ENCODE measurements at regions of chr17 and their contacts with region 1.

Region 1: DNA sequence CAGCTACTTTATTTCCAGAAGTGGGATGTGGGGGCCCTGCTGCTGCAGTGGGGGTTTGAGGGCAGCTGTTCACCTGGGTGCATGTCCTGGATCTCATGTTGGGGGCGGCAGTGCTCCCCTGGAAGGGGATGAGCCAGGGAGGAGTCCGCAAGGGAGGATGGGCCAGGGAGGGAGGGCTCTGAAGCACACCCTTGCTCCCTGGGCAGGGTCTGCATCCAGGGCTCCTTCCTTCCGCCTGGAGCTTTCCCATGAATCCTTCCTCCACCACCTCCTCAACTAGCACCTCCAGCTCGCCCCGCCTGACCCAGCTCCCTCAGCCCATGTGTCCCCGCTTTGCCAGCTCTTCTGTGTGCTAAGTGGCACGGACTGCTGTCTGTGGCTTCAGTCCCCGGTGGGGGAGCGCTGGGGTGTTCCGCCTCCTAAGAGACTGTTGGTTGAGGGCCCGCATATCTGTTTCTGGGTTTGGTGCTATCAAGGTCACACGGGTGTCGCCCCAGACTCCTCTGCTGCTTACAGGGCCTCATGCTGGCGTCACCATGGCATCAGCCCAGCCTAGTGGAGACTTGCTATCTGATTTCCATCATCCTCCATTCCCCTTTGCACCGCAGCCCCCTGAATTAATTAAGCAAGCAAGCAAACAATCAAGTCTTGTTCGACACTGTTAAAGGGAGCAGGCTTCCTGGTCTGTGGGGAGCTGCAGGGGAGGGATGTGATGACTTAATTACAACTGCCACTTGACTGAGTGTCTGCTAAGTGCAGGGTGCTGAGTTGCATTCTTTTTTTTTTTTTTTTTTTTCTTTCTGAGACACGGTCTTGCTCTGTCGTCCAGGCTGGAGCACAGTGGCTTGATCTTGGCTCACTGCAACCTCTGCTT is 71.8 kb downstream of the PRKCA start:
- DNase-seq: peak; percentile 76
- H3K4me3 Mint-ChIP-seq: peak overlapping the region; percentile 64
- H3K27ac Mint-ChIP-seq: peak overlapping the region; percentile 86
- H3K4me1 Mint-ChIP-seq: peaks cover 59% of the 10 kb centered on the region
- H3K27me3 Mint-ChIP-seq: no peaks in the 10 kb centered on the region

Region 2: GRCh38 chr17:66426397-66427033 is 52.3 kb after region 1 on chr17:
- intact Hi-C with region 1: loop called (anchors 10 kb)
- DNase-seq: peak; percentile 87
- H3K4me3 Mint-ChIP-seq: peak overlapping the region; percentile 28
- H3K27ac Mint-ChIP-seq: peak overlapping the region; percentile 59
- H3K4me1 Mint-ChIP-seq: peaks cover 66% of the 10 kb centered on the region
- H3K27me3 Mint-ChIP-seq: no peaks in the 10 kb centered on the region

Measured in activated CD4-positive, alpha-beta T cell treated with anti-CD3 and anti-CD28 coated beads, Interleukin-2, amount 10 ng/mL, durations not matched to agents 24 days and 14 days (primary cell).